ENCODE measurements at regions of chr12 and their contacts with region 1.

Region 1: GRCh38 chr12:133080368-133081158 is at the start of gene ZNF140:
- DNase-seq: peak; percentile 92 to 94
- ATAC-seq: peak; percentile 82 to 84
- H3K4me3 ChIP-seq: peak within 1 kb of the TSS; percentile 88 to 94 (median 91)
- H3K27ac ChIP-seq: peak within 1 kb of the TSS; percentile 95 to 98 (median 96)
- H3K4me1 ChIP-seq: peaks cover 4 to 12% of the 10 kb centered on the region in 2 donors
- H3K27me3 ChIP-seq: no peaks in the 10 kb centered on the region
- CTCF ChIP-seq: peak; percentile 14 to 42 (median 36)
- POLR2A ChIP-seq: peak; percentile 53 to 61
- total RNA-seq, gene ZNF140: 5.4 to 14.5 (median 9.0) TPM

Region 2: DNA sequence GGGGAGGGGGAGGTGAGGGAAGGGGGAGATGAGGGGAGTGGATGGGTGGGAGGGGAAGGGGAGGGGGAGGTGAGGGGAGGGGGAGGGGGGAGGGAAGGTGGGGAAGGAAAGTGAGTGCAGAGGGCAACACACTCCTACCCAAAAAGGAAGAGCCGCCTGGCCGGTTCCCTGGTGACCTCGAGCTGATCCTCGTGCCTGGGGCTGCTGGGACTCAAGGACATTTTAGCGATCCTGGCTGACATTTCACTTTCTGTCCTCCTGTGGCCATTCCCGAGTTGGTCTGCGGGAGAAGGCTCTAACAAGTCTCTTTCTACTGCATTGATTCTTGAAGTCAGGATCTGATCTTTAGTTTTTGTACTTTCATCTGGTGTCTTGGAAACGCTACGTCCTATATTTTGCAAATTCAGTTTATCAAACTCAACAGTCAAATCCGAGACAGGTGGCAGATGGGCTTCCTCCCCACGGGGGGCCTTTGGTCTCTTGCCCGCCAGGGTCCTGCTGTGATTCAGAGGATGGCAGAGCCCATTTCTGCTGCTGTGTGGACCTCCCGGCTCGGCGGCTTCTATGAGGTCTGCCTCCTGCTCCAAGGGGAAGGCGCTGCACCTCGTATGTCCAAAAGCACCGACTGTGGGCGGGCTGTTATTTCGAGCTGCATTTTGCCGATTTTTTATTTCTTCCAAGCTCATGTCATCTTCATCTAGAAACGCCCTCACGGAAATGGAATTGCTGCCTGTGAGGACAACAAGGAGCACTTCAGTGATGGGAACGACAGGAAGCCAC is 350.8 kb before region 1 on chr12:
- in situ Hi-C with region 1: no loop called
- intact Hi-C with region 1: no loop called
- DNase-seq: no peak
- ATAC-seq: no peak
- H3K4me3 ChIP-seq: no peak overlapping the region
- H3K27ac ChIP-seq: no peak overlapping the region
- H3K4me1 ChIP-seq: no peaks in the 10 kb centered on the region
- H3K27me3 ChIP-seq: no peaks in the 10 kb centered on the region
- CTCF ChIP-seq: no peak
- POLR2A ChIP-seq: no peak

Region 3: GRCh38 chr12:132766380-132767085 is 314.0 kb before region 1 on chr12:
- in situ Hi-C with region 1: no loop called
- intact Hi-C with region 1: loop called (anchors 1 kb)
- DNase-seq: peak; percentile 60 to 68
- ATAC-seq: peak; percentile 23 to 32
- H3K4me3 ChIP-seq: peak overlapping the region in 2 of 4 donors; percentile 15 to 27
- H3K27ac ChIP-seq: peak overlapping the region; percentile 53 to 80 (median 69)
- H3K4me1 ChIP-seq: peaks cover 18 to 21% of the 10 kb centered on the region in 2 donors
- H3K27me3 ChIP-seq: no peaks in the 10 kb centered on the region
- CTCF ChIP-seq: no peak
- POLR2A ChIP-seq: no peak

Region 4: DNA sequence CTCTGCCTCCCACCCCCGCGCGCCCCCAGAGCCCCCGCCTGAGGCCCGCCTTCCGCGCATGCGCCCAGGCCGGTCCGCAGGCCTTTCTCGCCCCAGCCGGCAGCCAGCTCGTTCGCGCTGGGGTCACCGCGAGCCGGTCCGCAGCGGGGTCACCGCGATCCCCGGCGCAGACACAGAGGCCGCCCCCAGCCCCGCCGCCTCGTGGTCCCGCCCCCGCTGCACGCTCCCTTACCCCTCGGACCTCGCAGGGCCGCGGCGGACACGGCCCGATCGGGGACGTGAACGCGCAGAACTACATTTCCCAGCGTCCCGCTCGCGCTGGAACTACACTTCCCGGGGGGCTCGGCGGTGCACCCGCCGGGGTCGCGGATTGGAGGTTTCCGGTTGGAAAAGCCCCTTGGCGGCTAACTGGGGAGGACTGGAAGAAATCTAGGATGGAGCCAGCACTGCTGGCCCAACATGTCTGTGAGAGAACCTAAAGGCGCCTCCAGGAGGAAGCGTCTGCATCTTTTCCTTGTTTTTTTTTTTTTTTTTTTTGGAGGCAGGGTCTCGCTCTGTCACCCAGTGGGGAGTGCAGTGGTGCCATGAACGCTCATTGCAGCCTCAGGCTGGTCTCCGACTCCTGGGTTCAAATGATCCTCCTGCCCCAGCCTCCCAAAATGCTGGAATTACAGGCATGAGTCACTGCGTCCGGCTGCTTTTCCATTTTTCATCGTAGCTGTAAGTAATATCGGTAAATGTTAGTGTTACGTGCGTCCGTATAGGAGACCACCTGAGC is 124.4 kb before region 1 on chr12 and contains the start of gene ZNF605:
- in situ Hi-C with region 1: no loop called
- intact Hi-C with region 1: loop called (anchors 1 kb)
- DNase-seq: peak; percentile 70 to 78
- ATAC-seq: peak; percentile 94 to 97
- H3K4me3 ChIP-seq: peak within 1 kb of the TSS; percentile 85 to 99 (median 88)
- H3K27ac ChIP-seq: peak within 1 kb of the TSS; percentile 82 to 96 (median 94)
- H3K4me1 ChIP-seq: peaks cover 9 to 20% of the 10 kb centered on the region in 2 donors
- H3K27me3 ChIP-seq: no peaks in the 10 kb centered on the region
- CTCF ChIP-seq: no peak
- POLR2A ChIP-seq: peak in 1 of 2 donors; percentile 30
- total RNA-seq, gene ZNF605: 2.1 to 4.6 (median 2.2) TPM

Region 5: DNA sequence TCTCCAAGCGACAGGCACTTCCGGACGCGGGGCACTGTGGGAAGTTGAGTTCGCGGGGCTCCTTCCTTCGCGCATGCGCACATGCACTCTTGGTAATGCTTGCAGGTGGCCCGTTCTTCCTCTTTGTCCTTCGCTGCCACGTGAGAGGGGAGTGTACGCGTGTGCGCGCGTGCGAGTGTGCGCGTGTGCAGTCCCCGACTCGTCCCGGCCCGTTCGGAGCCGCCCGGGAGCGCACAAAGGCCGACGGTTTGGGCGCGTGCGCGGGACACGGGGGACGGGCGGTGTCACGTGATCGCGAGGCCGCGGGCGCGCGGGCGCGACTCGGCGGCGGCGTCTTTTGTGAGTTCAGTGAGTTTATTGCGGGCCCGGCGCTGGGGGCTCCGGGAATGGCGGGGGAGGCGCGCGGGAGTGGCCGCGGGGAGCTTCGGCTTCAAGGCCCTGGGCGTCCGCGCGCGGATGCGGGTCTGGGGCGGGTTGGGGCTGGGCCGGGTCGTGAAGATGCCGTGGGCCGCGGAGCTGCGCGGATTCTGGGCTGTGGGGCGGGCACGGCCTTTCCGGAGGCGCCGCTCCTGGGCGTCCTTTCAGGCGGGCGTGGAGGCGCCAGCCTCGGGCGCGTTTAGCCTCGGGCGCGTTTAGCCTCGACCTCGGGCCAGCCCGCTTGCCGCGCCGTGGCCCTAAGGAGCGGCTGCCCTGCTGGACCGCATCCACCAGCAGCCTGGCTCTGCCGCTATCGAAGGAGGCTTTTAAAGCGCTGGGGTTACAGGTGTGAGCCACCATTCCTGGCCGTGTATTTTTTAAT is 43.2 kb before region 1 on chr12 and contains the start of gene ZNF84:
- in situ Hi-C with region 1: loop called in 2 of 4 experiments (anchors 5 kb)
- intact Hi-C with region 1: loop called (anchors 1 kb)
- DNase-seq: peak; percentile 93 to 94
- ATAC-seq: peak; percentile 96 to 99
- H3K4me3 ChIP-seq: peak within 1 kb of the TSS; percentile 74 to 90 (median 80)
- H3K27ac ChIP-seq: peak within 1 kb of the TSS; percentile 83 to 97 (median 91)
- H3K4me1 ChIP-seq: peaks cover 11 to 12% of the 10 kb centered on the region in 2 donors
- H3K27me3 ChIP-seq: no peaks in the 10 kb centered on the region
- CTCF ChIP-seq: peak in 2 of 5 experiments; percentile 23 to 47
- POLR2A ChIP-seq: peak; percentile 60 to 61
- total RNA-seq, gene ZNF84: 5.3 to 20.9 (median 13.5) TPM

Region 6: GRCh38 chr12:133181238-133181959 is 100.8 kb after region 1 on chr12 and contains the start of gene ZNF268:
- in situ Hi-C with region 1: no loop called
- intact Hi-C with region 1: loop called (anchors 1 kb)
- DNase-seq: peak; percentile 68 to 83
- ATAC-seq: peak; percentile 90 to 100
- H3K4me3 ChIP-seq: peak within 1 kb of the TSS; percentile 65 to 91 (median 84)
- H3K27ac ChIP-seq: peak within 1 kb of the TSS; percentile 44 to 76 (median 62)
- H3K4me1 ChIP-seq: peaks cover 7 to 9% of the 10 kb centered on the region in 2 donors
- H3K27me3 ChIP-seq: no peaks in the 10 kb centered on the region
- CTCF ChIP-seq: peak; percentile 40 to 76 (median 75)
- POLR2A ChIP-seq: no peak
- total RNA-seq, gene ZNF268: 3.8 to 8.9 (median 4.3) TPM